GM10248 (cell line): ENCODE measurements at regions of chr6 and their contacts with region 1.

Region 1: DNA sequence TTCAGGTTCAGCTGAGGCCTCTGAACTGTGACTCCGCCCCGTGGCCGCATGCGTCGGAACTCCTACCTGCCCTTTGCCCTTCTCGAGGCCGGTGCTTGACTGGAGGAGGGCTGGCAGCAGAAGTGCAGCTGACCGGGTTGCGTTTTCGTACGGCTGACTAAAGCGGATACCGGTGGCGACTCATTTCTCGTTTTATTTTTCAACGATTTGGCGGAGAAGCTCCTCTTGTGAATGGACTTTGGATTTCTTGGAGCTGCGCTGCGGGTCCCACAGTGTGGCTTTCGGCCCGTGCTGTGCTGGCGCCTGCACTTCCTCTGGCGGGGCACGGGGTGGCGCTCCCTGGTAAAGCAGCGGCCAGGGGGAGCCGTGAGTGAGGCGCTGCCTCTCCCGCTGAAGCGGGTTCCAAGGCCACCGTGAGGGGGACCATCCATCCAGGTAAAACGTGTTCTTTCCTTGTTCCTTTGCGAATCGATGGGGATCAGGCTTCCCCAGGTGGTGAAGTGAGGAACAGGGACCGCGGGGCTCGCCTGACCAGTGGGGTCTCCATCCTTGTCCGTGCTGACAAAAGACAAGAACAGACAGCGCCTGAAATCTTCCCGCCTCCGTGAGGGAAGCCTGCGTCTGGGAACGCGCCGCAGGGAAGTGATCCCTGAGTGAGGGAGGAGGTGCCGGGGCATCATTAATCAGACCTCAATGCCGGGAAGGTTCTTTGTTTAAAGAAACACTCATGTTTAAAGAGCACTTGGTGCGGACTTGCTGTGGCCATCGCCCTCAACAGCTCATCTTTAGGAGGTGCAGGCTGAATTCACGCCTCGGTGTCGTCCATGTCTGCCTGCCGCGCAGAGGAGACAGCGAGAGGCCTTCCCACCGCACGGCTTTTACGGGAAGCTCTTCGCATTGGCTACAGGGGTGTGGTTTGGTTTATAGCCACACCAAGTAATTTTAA is 38.8 kb downstream of the ERMARD start:
- DNase-seq: peak; percentile 89
- CTCF ChIP-seq: peak; percentile 99

Region 2: GRCh38 chr6:169292338-169293124 is 497.7 kb before region 1 on chr6:
- CTCF ChIA-PET with region 1: no interaction called
- POLR2A ChIA-PET with region 1: no interaction called
- DNase-seq: no peak
- CTCF ChIP-seq: no peak

Region 3: GRCh38 chr6:169800668-169801395 is 10.6 kb after region 1 on chr6:
- CTCF ChIA-PET with region 1: interaction called, 87 read pairs
- POLR2A ChIA-PET with region 1: interaction called, 3 read pairs
- DNase-seq: no peak
- CTCF ChIP-seq: no peak

Region 4: DNA sequence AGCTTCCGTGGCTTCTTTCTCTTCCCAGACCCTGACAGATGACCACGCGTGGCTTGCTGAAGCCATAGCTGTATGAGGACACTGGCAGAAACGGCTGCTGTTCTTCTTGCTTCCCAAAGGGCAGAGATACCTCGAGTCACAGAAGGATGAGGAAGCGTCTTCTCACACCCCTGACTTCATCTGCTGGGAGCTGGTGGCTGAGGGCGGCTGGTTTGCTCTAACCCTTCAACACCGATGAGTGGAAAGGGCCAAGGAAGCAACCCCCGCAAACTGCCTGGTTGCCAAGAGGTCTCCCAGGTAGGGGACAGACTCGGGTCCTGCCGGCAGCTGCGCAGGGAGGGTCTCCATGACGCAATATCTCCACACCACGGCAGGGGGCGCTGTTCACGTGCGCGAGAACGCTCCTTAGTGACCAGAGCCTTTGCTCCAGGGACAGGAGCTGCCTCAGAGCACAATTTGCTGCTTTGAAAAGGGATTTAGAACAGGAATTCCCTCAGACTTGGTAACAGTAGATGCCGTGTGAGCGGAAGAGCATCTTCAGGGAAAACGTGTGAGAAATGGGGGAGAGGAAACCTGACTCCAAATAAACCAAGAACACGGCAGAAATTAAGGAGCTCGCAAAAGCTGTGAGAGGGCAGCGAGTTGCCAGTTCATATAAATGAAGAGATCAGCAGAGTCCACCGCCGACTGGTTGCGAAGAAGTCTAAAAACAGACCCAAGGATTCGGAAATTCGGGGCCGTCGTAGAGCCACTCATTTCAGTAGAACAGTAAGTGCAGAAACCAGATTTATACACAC is 41.4 kb after region 1 on chr6:
- CTCF ChIA-PET with region 1: interaction called, 20 read pairs
- POLR2A ChIA-PET with region 1: no interaction called
- DNase-seq: peak; percentile 80
- CTCF ChIP-seq: peak; percentile 94

Region 5: DNA sequence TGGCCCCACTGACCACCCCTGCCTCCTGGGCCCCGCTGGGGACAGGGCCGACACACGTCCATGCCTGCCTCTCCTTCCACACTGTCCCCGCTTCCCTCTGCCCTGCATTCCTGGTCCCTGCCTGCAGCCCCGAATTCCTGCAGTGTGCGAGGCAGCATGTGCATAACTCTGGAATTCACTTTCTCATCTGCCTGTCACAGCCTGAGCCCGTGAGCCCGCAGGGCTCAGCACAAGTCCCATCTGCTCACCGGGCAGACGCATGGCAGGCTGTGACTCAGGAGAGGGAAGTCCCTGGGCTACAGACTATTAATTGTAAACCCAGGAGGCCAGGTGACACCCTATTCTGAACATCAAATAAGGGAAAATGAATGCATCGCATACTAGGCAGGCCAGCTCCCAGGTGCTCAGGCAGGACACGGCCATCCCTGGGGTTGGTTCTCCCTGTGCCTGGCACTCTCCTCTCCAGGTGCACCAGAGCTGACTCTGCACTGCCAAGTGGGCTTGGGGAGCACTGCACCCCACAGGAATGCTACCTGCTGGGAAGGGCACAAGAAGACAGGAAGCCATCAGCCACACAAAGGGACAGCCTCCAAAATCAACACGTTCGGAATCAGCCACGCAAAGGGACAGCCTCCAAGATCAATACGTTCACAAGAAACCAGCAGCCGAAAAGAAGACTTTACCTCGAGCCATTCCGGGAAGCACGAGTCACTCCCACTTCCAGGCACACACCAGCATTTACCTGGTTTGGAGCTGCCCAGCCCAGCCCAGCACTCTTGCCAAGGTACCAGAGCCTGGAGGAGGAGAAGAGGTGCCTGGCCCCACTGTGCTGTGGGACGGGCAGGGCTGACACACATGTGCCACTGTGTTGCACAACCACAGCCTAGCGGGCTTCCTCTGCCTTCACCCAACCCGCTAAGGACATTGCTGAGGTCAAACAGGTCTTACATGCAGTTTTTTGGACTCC is 434.7 kb after region 1 on chr6:
- CTCF ChIA-PET with region 1: no interaction called
- POLR2A ChIA-PET with region 1: no interaction called
- DNase-seq: no peak
- CTCF ChIP-seq: no peak

Region 6: GRCh38 chr6:170522565-170523183 is 732.4 kb after region 1 on chr6:
- CTCF ChIA-PET with region 1: interaction called, 77 read pairs
- POLR2A ChIA-PET with region 1: no interaction called
- DNase-seq: peak; percentile 20
- CTCF ChIP-seq: peak; percentile 43